ENCODE measurements at regions of chr9 and their contacts with region 1.

Region 1: GRCh38 chr9:37820142-37820541 is 19.5 kb downstream of the DCAF10 start:
- DNase-seq: no peak
- H3K4me3 ChIP-seq: no peak overlapping the region
- H3K27ac ChIP-seq: no peak overlapping the region
- H3K4me1 ChIP-seq: no peaks in the 10 kb centered on the region
- H3K27me3 ChIP-seq: no peaks in the 10 kb centered on the region
- CTCF ChIP-seq: no peak
- POLR2A ChIP-seq: no peak

Region 2: GRCh38 chr9:37760416-37761161 is 59.6 kb before region 1 on chr9:
- intact Hi-C with region 1: no loop called
- DNase-seq: no peak
- H3K4me3 ChIP-seq: no peak overlapping the region
- H3K27ac ChIP-seq: no peak overlapping the region
- H3K4me1 ChIP-seq: no peaks in the 10 kb centered on the region
- H3K27me3 ChIP-seq: no peaks in the 10 kb centered on the region
- CTCF ChIP-seq: no peak
- POLR2A ChIP-seq: no peak

Region 3: DNA sequence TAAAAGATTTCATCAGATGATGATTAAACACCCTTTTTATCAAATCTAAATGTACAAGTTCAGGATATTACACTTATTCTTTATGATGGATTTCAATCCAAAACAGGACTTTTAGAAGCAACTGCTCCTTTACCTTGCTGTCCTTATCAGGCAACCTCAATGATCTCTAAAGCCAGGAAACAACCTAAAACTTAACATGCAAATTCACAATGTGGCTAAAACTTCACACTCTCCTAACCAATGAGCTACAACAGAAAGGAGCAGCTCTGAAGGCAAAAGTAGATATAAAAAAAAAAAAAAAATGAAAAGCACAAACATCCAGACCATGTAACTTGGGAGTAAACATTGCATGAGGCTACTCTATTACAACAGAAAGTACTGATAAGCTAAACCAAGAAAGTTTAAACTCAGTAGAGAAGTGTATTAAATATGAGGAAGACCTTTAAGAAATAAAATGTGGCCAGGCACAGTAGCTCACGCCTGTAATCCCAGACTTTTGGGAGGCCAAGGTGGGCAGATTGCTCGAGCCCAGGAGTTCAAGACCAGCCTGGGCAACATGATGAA is 60.9 kb after region 1 on chr9:
- intact Hi-C with region 1: loop called (anchors 10 kb)
- DNase-seq: no peak
- H3K4me3 ChIP-seq: no peak overlapping the region
- H3K27ac ChIP-seq: no peak overlapping the region
- H3K4me1 ChIP-seq: no peaks in the 10 kb centered on the region
- H3K27me3 ChIP-seq: no peaks in the 10 kb centered on the region
- CTCF ChIP-seq: no peak
- POLR2A ChIP-seq: no peak